ENCODE measurements at regions of chr18 and their contacts with region 1.

Region 1: DNA sequence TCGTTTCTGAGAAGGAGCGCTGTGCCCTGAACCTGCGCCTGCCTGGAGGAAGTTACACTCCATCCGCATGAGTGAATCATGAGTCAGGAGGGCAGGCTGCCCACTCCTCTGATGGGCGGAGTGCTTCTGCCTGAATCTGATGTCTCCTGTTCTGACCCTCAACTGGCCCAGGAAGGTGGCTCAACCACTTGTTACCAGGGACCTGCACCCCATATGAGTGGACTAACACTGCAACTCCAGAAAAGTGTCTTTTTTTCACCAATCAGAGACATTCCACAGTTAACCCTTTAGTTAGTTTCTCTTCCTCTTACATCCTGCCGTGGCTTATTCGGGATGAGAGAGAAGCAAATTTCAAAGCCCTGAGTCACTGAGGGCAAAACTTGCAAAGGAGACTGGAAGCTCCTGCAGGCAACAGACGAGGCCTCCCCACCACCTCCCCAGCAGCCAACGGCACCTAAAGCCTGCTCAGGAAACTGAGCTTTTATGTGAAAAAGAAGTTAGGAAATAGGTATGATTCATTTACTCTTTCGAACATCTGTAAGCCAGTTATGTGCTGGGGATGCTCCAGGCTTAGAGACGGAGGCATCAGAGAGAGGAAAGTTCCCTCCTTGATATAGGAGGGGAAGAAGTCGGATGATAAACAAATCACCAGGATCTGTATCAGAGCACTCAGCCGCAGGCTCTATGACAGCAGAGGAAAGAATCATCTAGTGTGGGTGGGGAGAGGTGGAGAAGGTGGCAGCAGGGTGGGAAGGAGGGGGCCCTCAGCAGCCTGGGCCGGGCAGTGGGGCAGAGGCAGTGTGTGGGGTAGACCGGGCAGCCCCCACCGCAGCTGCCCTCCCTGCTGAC is 30.9 kb downstream of the MBP start:
- DNase-seq: peak; percentile 82
- H3K4me3 Mint-ChIP-seq: peak overlapping the region; percentile 50
- H3K27ac Mint-ChIP-seq: peak overlapping the region; percentile 98
- H3K4me1 Mint-ChIP-seq: peaks cover 92% of the 10 kb centered on the region
- H3K27me3 Mint-ChIP-seq: no peaks in the 10 kb centered on the region

Region 2: GRCh38 chr18:76374330-76375281 is 727.0 kb before region 1 on chr18:
- CTCF ChIA-PET with region 1: no interaction called
- intact Hi-C with region 1: loop called (anchors 1 kb)
- DNase-seq: peak; percentile 80
- H3K4me3 Mint-ChIP-seq: no peak overlapping the region
- H3K27ac Mint-ChIP-seq: peak overlapping the region; percentile 74
- H3K4me1 Mint-ChIP-seq: peaks cover 46% of the 10 kb centered on the region
- H3K27me3 Mint-ChIP-seq: peaks cover 2% of the 10 kb centered on the region

Region 3: DNA sequence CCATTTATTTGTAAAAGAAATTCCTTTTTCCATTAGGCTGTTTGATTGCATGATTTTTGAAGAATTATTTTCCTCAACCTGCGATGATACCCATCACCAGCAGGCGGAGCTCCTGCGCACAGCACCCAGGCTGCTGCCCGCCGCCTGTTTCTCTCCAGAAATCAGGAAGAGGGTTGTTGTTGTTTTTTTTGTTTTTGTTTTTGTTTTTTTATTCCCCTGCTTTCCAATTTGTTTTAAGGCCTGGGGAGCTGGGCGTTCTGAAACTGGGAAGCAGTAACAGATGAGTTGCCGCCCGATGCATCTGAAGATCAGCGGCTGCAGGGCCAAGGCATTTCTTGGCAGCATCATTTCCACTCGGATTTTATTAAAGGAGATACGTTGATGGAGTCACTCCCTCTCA is 101.1 kb before region 1 on chr18:
- CTCF ChIA-PET with region 1: interaction called, 4 read pairs
- intact Hi-C with region 1: loop called (anchors 2 kb)
- DNase-seq: peak; percentile 60
- H3K4me3 Mint-ChIP-seq: no peak overlapping the region
- H3K27ac Mint-ChIP-seq: no peak overlapping the region
- H3K4me1 Mint-ChIP-seq: peaks cover 20% of the 10 kb centered on the region
- H3K27me3 Mint-ChIP-seq: no peaks in the 10 kb centered on the region

Region 4: GRCh38 chr18:77067291-77068061 is 34.2 kb before region 1 on chr18:
- CTCF ChIA-PET with region 1: interaction called, 21 read pairs
- intact Hi-C with region 1: loop called (anchors 1 kb)
- DNase-seq: peak; percentile 77
- H3K4me3 Mint-ChIP-seq: peak overlapping the region; percentile 17
- H3K27ac Mint-ChIP-seq: peak overlapping the region; percentile 92
- H3K4me1 Mint-ChIP-seq: peaks cover 99% of the 10 kb centered on the region
- H3K27me3 Mint-ChIP-seq: no peaks in the 10 kb centered on the region

Region 5: DNA sequence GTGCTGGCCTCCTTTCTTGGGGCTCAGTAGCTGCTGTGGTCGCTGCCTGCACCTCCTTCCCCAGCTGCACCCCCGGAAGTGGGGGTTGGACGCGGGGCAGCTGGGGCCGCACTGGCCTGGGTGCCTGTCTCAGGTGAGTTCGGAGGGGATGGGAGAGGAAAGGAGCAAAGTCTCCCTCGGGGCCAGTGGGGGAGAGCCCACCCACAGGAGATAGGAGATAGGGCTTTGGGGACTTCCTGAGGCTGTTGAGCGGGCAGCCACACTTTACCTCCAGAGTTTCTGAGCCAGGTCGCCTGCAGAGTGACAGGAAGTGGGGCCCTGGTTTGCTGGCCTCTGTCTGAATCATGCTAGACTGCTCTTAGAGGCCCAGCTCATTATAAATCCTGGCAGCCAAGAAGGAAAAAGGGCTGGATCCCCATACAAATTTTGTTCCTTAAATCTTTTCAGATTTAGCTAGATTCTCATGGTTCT is 22.9 kb after region 1 on chr18:
- CTCF ChIA-PET with region 1: interaction called, 10 read pairs
- intact Hi-C with region 1: loop called (anchors 1 kb)
- DNase-seq: peak; percentile 81
- H3K4me3 Mint-ChIP-seq: peak overlapping the region; percentile 70
- H3K27ac Mint-ChIP-seq: peak overlapping the region; percentile 93
- H3K4me1 Mint-ChIP-seq: peaks cover 88% of the 10 kb centered on the region
- H3K27me3 Mint-ChIP-seq: no peaks in the 10 kb centered on the region

Region 6: DNA sequence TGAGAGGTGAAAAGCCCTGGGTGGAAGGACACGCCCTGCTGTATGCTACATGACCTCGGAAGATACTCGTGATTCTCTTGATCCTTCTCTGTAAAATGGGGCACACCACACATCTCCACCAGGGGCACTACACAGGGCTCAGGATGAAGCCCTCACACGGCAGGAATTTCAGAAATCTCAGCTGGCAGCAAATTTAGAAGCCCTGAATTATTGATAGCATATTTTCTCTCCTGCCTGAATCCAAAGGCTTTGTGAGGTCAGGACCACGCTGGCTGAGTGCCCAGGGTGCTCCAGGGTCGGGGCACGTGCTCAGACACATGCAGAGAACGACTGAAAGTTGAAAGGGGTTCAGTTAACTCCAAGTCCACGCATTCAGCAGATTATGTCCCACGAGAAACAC is 105.9 kb after region 1 on chr18:
- CTCF ChIA-PET with region 1: interaction called, 5 read pairs
- intact Hi-C with region 1: loop called (anchors 1 kb)
- DNase-seq: peak; percentile 74
- H3K4me3 Mint-ChIP-seq: no peak overlapping the region
- H3K27ac Mint-ChIP-seq: peak overlapping the region; percentile 71
- H3K4me1 Mint-ChIP-seq: peaks cover 32% of the 10 kb centered on the region
- H3K27me3 Mint-ChIP-seq: no peaks in the 10 kb centered on the region

Region 7: DNA sequence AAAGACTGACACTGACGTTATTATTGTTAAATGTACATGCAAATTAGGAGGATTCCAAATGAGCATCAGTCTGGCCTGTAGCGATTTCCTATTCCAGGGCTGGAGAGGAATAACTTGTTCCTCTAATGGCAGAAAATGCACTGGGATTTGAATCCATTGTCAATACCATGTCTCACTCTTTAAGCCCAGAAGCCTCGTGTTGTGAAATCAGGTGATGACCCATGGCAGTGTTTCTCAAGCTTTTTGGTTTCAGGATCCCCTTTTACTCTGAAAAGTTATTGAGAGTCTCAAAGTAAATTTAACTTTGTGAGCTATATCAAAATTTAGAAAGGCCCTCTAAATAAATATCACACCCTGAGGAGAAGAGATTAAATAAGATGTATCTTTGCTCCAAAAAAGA is 427.2 kb after region 1 on chr18:
- CTCF ChIA-PET with region 1: no interaction called
- intact Hi-C with region 1: no loop called
- DNase-seq: no peak
- H3K4me3 Mint-ChIP-seq: no peak overlapping the region
- H3K27ac Mint-ChIP-seq: no peak overlapping the region
- H3K4me1 Mint-ChIP-seq: no peaks in the 10 kb centered on the region
- H3K27me3 Mint-ChIP-seq: peaks cover 3% of the 10 kb centered on the region

Region 8: GRCh38 chr18:77560341-77560992 is 458.8 kb after region 1 on chr18:
- CTCF ChIA-PET with region 1: no interaction called
- intact Hi-C with region 1: loop called (anchors 1 kb)
- DNase-seq: peak; percentile 18
- H3K4me3 Mint-ChIP-seq: no peak overlapping the region
- H3K27ac Mint-ChIP-seq: no peak overlapping the region
- H3K4me1 Mint-ChIP-seq: peaks cover 6% of the 10 kb centered on the region
- H3K27me3 Mint-ChIP-seq: peaks cover 26% of the 10 kb centered on the region